GM10248 (cell line): ENCODE measurements at regions of chr11 and their contacts with region 1.

Region 1: DNA sequence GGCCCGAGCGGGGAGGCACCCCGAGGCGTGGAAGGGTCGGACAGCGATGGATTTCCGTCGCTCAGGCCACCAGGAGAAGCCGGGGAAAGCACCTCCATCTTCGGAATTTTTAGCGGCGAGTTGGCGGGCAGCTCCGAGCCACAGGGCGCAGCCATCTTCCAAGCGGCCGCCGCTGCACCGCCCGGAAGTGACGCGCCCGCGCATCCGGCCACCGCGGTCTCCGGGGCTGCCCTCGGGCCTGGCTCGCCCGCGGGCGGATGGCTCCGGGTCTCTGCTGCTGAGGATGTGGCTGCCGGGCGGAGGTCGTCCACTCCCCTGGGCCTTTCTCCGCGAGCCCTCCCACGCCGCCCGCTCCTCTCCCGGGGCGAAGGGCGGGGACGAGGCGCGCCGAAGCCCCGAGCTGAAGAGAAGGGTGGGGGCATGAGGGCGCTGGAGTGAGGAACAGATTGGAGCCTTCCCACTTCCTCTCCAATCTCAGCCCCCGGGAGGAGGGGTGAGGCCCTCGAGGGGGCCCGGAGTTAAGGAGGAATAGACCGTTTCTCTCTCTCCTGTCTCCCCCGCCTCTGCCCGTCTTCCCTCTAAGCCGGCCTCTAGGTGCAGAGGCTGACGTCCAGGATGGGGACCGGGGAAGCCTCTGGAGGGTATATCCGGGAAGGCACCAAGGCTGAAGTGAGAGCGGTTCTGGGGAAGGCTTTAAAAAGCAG is at the start of gene MSANTD2:
- DNase-seq: peak; percentile 90
- CTCF ChIP-seq: no peak

Region 2: GRCh38 chr11:124746621-124747243 is 53.6 kb before region 1 on chr11:
- CTCF ChIA-PET with region 1: interaction called, 27 read pairs
- POLR2A ChIA-PET with region 1: no interaction called
- DNase-seq: peak; percentile 92
- CTCF ChIP-seq: peak; percentile 82

Region 3: GRCh38 chr11:124823504-124824372 is 23.4 kb after region 1 on chr11:
- CTCF ChIA-PET with region 1: no interaction called
- POLR2A ChIA-PET with region 1: no interaction called
- DNase-seq: no peak
- CTCF ChIP-seq: no peak